ENCODE measurements at regions of chr7 and their contacts with region 1.

Region 1: DNA sequence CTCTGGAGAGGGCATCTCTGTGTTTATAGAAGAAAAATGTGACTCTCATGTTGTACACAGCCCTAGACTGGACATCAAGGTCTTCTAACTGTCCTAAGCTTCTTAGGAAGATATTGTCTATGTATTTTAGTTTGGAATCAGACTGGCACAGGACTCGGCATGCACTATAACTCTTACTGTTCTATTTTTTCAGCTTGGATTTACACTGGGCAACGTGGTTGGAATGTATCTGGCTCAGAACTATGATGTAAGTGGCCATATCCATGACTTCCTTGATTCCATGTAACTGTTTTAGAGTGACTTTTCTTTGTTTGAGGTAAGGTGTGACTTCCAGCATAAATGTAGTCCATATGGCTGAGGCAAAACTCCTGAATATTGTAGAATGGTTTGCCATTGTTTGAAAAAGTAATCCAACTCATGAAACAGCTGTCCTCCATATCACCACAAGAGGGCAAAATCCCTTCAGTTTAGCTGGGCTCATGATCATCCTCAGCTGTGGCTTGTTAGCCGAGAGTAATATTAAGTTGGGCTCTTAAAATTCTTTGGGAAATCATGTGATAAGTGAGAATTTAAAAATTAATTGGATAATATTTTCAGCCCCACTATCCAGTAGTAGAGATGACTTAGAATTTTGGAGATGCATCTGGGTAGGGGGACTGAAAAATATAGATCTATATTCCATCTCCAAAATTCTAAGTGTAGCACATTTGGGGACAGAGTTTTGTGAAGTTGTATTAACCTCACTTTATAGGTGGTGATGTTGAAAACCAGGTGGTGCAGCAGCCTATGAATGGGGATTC is 10.4 kb downstream of the STMP1 start:
- DNase-seq: peak; percentile 84
- ATAC-seq: peak; percentile 71
- H3K4me3 ChIP-seq: no peak overlapping the region
- H3K27ac ChIP-seq: no peak overlapping the region
- H3K4me1 ChIP-seq: peaks cover 9% of the 10 kb centered on the region
- H3K27me3 ChIP-seq: no peaks in the 10 kb centered on the region
- CTCF ChIP-seq: peak; percentile 88
- POLR2A ChIP-seq: no peak
- RAD21 ChIP-seq: peak; percentile 91

Region 2: GRCh38 chr7:134886353-134887081 is 786.2 kb before region 1 on chr7:
- CTCF ChIA-PET with region 1: no interaction called
- POLR2A ChIA-PET with region 1: no interaction called
- dilution Hi-C with region 1: no loop called
- in situ Hi-C with region 1: no loop called
- intact Hi-C with region 1: no loop called
- DNase-seq: peak; percentile 80
- ATAC-seq: peak; percentile 61
- H3K4me3 ChIP-seq: peak overlapping the region; percentile 8; the same call in 1 of the 2 replicates
- H3K27ac ChIP-seq: peak overlapping the region; percentile 91
- H3K4me1 ChIP-seq: peaks cover 21% of the 10 kb centered on the region
- H3K27me3 ChIP-seq: no peaks in the 10 kb centered on the region
- CTCF ChIP-seq: no peak
- POLR2A ChIP-seq: no peak
- RAD21 ChIP-seq: no peak

Region 3: GRCh38 chr7:135795846-135796570 is 123.2 kb after region 1 on chr7:
- CTCF ChIA-PET with region 1: interaction called, 9 read pairs
- POLR2A ChIA-PET with region 1: no interaction called
- dilution Hi-C with region 1: no loop called
- in situ Hi-C with region 1: no loop called
- intact Hi-C with region 1: loop called (anchors 1 kb)
- DNase-seq: no peak
- ATAC-seq: peak; percentile 55
- H3K4me3 ChIP-seq: no peak overlapping the region
- H3K27ac ChIP-seq: peak overlapping the region; percentile 8; the same call in 1 of the 2 replicates
- H3K4me1 ChIP-seq: peaks cover 6% of the 10 kb centered on the region
- H3K27me3 ChIP-seq: no peaks in the 10 kb centered on the region
- CTCF ChIP-seq: no peak
- POLR2A ChIP-seq: no peak
- RAD21 ChIP-seq: no peak

Region 4: GRCh38 chr7:135977007-135977741 is 304.4 kb after region 1 on chr7 and contains the start of gene MTPN:
- CTCF ChIA-PET with region 1: no interaction called
- POLR2A ChIA-PET with region 1: no interaction called
- dilution Hi-C with region 1: no loop called
- in situ Hi-C with region 1: no loop called
- intact Hi-C with region 1: loop called (anchors 10 kb)
- DNase-seq: peak; percentile 92
- ATAC-seq: peak; percentile 98
- H3K4me3 ChIP-seq: peak within 1 kb of the TSS; percentile 88
- H3K27ac ChIP-seq: peak within 1 kb of the TSS; percentile 83
- H3K4me1 ChIP-seq: peaks cover 3% of the 10 kb centered on the region; the same call in 1 of the 2 replicates
- H3K27me3 ChIP-seq: no peaks in the 10 kb centered on the region
- CTCF ChIP-seq: no peak
- POLR2A ChIP-seq: peak; percentile 64; the same call in 1 of the 2 replicates
- RAD21 ChIP-seq: no peak
- total RNA-seq, gene MTPN: 58.8 and 107 TPM in 2 replicates

Region 5: DNA sequence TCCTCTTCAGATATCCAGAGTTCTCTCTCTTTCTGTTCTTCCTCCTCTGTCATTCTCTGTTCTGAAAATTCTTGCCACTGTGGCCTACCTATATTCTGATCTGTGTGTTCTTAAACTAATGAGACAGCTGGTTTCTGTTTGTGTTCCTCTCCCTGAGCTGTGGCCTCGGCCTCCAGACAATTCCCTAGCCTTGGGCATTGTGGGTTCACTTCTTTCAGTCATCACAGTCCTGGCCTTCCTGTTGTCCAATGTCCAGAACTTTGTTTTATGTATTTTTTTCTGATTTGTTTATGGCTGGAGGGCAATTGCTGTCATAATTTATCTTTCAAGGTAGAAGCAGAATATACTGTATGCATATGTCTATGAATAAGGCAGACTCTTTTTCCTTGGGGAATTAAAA is 477.6 kb after region 1 on chr7:
- CTCF ChIA-PET with region 1: no interaction called
- POLR2A ChIA-PET with region 1: no interaction called
- dilution Hi-C with region 1: no loop called
- in situ Hi-C with region 1: no loop called
- intact Hi-C with region 1: no loop called
- DNase-seq: no peak
- ATAC-seq: no peak
- H3K4me3 ChIP-seq: no peak overlapping the region
- H3K27ac ChIP-seq: no peak overlapping the region
- H3K4me1 ChIP-seq: no peaks in the 10 kb centered on the region
- H3K27me3 ChIP-seq: no peaks in the 10 kb centered on the region
- CTCF ChIP-seq: no peak
- POLR2A ChIP-seq: no peak
- RAD21 ChIP-seq: no peak

Measured in IMR-90 (cell line).